Mammary epithelial cell (primary cell): ENCODE measurements at regions of chr15 and their contacts with region 1.

Region 1: DNA sequence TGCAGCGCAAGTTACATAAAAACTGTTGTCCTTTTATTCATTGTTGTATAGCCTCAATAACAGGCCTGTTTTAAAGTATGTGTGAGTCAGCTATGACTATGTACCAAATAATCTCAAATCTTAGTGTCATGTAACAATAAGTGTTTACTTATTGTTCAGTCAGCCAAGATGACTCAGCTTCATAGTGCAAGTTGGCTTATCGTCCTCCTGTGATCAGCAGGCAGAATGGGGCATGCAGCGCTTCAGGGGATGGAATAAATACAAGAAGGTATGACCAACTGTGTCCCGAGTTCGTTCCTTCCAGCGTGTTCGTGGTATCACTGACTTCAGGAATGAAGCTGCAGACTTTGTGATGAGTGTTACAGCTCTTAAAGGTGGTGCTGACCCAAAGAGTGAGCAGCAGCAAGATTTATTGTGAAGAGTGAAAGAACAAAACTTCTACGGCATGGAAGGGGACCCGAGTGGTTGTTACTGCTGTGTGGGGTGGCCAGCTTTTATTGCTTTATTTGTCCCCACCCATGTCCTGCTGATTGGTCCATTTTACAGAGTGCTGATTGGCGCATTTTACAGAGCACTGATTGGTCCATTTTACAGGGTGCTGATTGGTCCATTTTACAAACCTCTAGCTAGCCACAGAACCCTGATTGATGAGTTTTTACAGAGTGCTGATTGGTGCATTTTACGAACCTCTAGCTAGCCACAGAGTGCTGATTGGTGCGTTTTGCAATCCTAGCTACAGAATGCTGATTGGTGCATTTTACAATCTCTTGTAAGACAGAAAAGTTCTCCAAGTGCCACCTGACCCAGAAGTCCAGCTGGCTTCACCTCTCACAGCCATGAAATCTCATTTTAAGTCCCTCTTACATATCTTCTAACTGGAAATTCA is 1016.0 kb downstream of the MCTP2 start:
- DNase-seq: peak; percentile 99
- H3K4me3 ChIP-seq: no peak overlapping the region
- H3K27ac ChIP-seq: peak overlapping the region; percentile 50
- H3K4me1 ChIP-seq: peaks cover 20% of the 10 kb centered on the region
- H3K27me3 ChIP-seq: no peaks in the 10 kb centered on the region
- CTCF ChIP-seq: no peak

Region 2: DNA sequence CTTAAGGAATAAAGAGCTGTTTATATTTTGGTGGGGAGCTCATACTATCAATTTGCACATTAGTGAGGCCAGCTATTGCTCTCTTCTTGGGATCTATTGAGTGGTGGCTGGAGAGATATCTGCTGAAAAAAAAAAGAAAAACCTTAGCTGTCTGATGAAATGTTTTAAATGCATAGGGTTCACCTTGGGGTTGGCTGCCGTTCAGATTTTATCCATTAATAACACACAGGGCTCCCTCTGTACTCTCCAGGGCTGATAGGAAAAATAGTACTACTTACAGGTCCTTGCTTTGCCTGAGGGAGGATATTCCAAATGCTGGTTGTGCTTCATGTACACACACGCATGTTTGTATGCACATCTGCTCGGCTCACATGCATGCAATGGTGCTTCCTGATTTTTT is 212.2 kb before region 1 on chr15:
- CTCF ChIA-PET with region 1: no interaction called
- dilution Hi-C with region 1: no loop called
- in situ Hi-C with region 1: no loop called
- intact Hi-C with region 1: loop called (anchors 5 kb)
- DNase-seq: no peak
- H3K4me3 ChIP-seq: no peak overlapping the region
- H3K27ac ChIP-seq: no peak overlapping the region
- H3K4me1 ChIP-seq: no peaks in the 10 kb centered on the region
- H3K27me3 ChIP-seq: no peaks in the 10 kb centered on the region
- CTCF ChIP-seq: no peak

Region 3: GRCh38 chr15:95169541-95170459 is 77.5 kb before region 1 on chr15:
- CTCF ChIA-PET with region 1: no interaction called
- dilution Hi-C with region 1: no loop called
- in situ Hi-C with region 1: no loop called
- intact Hi-C with region 1: loop called (anchors 10 kb)
- DNase-seq: no peak
- H3K4me3 ChIP-seq: no peak overlapping the region
- H3K27ac ChIP-seq: no peak overlapping the region
- H3K4me1 ChIP-seq: no peaks in the 10 kb centered on the region
- H3K27me3 ChIP-seq: no peaks in the 10 kb centered on the region
- CTCF ChIP-seq: no peak

Region 4: GRCh38 chr15:95226850-95227634 is 20.3 kb before region 1 on chr15:
- CTCF ChIA-PET with region 1: no interaction called
- dilution Hi-C with region 1: no loop called
- in situ Hi-C with region 1: no loop called
- intact Hi-C with region 1: loop called (anchors 1 kb)
- DNase-seq: peak; percentile 94
- H3K4me3 ChIP-seq: peak overlapping the region in 1 of 3 experiments; percentile 15
- H3K27ac ChIP-seq: peak overlapping the region; percentile 95
- H3K4me1 ChIP-seq: peaks cover 24% of the 10 kb centered on the region
- H3K27me3 ChIP-seq: no peaks in the 10 kb centered on the region
- CTCF ChIP-seq: no peak

Region 5: DNA sequence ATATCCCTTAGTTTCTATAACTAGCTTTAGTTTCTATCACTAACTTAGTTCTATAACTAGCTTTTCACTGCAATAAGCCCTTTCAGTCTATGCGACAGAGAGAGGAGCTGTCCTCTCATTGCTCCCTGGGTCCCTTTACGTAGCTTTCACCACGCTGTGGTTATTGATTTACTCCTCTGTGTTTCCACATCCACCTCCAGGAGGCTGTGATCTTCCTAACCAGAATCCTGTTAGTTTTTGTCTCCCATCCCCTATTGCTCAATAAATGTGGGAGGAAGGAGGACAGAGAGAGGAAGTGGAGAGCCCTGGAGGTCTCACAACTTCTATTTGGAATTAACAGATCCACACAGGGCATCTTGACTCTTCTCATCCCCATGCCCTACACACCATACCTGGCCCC is 20.1 kb after region 1 on chr15:
- CTCF ChIA-PET with region 1: no interaction called
- dilution Hi-C with region 1: no loop called
- in situ Hi-C with region 1: no loop called
- intact Hi-C with region 1: no loop called
- DNase-seq: no peak
- H3K4me3 ChIP-seq: no peak overlapping the region
- H3K27ac ChIP-seq: no peak overlapping the region
- H3K4me1 ChIP-seq: peaks cover 9% of the 10 kb centered on the region
- H3K27me3 ChIP-seq: no peaks in the 10 kb centered on the region
- CTCF ChIP-seq: no peak